Endothelial cell of umbilical vein (primary cell): ENCODE measurements at regions of chr17 and their contacts with region 1.

Region 1: GRCh38 chr17:81601525-81602120 is 35.3 kb downstream of the NPLOC4 start:
- DNase-seq: peak; percentile 80
- H3K4me3 ChIP-seq: no peak overlapping the region
- H3K27ac ChIP-seq: no peak overlapping the region
- H3K4me1 ChIP-seq: peaks cover 6% of the 10 kb centered on the region
- H3K27me3 ChIP-seq: no peaks in the 10 kb centered on the region
- CTCF ChIP-seq: peak; percentile 69 to 71
- POLR2A ChIP-seq: no peak

Region 2: DNA sequence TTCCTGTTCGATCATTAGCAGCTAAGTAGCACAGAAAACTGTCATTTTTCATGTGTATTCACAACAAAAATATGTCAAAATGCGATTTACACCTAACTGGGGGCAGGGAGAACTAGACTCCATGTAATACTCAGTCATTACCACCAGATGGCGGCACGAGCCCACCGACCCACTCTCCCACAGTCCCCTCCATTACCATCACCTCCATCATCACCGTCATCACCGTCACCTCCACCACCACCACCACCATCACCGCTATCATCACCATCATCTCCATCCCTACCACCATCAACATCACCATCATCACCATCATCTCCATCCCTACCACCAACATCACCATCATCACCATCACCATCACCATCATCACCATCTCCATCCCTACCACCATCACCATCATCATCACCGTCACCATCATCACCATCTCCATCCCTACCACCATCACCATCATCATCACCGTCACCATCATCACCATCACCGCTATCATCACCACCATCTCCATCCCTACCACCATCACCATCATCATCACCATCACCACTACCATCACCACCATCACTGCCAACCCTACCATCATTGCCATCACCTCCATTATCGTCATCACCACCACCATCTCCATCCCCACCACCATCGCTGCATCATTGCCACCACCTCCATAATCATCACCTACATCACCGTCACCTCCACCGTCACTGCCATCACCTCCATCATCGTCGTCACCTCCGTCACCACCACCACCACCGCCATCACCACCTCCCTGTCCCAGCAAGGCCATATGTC is 348.1 kb before region 1 on chr17:
- CTCF ChIA-PET with region 1: interaction called, 10 read pairs
- POLR2A ChIA-PET with region 1: no interaction called
- dilution Hi-C with region 1: no loop called
- intact Hi-C with region 1: loop called (anchors 1 kb)
- DNase-seq: peak; percentile 43
- H3K4me3 ChIP-seq: no peak overlapping the region
- H3K27ac ChIP-seq: no peak overlapping the region
- H3K4me1 ChIP-seq: no peaks in the 10 kb centered on the region
- H3K27me3 ChIP-seq: no peaks in the 10 kb centered on the region
- CTCF ChIP-seq: peak; percentile 66 to 76
- POLR2A ChIP-seq: no peak

Region 3: DNA sequence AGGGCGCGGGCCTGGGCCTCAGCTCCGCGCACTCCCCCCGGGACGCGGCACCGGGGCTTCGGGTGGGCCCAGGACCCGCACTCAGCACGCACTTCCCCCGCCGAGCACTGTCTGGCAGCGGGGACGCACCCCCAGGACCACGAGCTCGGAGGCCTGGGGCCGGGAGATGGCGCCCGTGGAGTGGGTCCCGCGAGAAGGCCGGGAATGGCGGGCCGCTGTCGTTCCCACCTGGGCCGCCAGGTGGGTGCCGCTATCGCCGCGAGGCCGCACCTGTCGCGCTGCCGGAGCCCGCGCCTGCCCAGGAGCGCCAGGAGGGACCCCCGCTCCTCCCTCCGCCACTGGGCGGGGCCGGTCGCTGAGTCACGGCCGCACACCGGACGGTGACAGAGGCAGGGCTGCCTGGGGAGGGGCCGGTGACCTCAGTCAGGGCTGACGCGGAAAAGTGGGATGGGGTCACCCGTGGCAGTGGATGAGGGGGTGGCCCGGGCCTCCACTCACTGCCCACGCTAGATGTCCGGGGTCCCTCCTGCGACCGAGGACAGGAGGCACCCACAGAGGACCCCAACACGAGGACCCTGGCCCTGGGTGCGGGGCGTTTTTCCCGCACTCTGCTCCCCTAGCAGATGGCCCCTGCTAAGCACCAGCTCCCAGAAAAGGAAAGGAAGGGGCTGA is 82.2 kb before region 1 on chr17:
- CTCF ChIA-PET with region 1: interaction called, 11 read pairs
- POLR2A ChIA-PET with region 1: no interaction called
- dilution Hi-C with region 1: no loop called
- intact Hi-C with region 1: no loop called
- DNase-seq: no peak
- H3K4me3 ChIP-seq: peak overlapping the region; percentile 11 to 32 (median 22)
- H3K27ac ChIP-seq: no peak overlapping the region
- H3K4me1 ChIP-seq: peaks cover 23% of the 10 kb centered on the region
- H3K27me3 ChIP-seq: no peaks in the 10 kb centered on the region
- CTCF ChIP-seq: peak; percentile 8 to 43
- POLR2A ChIP-seq: no peak

Region 4: GRCh38 chr17:81553018-81553615 is 48.5 kb before region 1 on chr17:
- CTCF ChIA-PET with region 1: interaction called, 16 read pairs
- POLR2A ChIA-PET with region 1: no interaction called
- dilution Hi-C with region 1: no loop called
- intact Hi-C with region 1: loop called (anchors 1 kb)
- DNase-seq: peak; percentile 81
- H3K4me3 ChIP-seq: peak overlapping the region; percentile 61 to 93 (median 72)
- H3K27ac ChIP-seq: peak overlapping the region; percentile 79
- H3K4me1 ChIP-seq: peaks cover 46% of the 10 kb centered on the region
- H3K27me3 ChIP-seq: no peaks in the 10 kb centered on the region
- CTCF ChIP-seq: no peak
- POLR2A ChIP-seq: peak; percentile 73

Region 5: GRCh38 chr17:81612172-81612970 is 10.7 kb after region 1 on chr17:
- CTCF ChIA-PET with region 1: interaction called, 19 read pairs
- POLR2A ChIA-PET with region 1: interaction called, 3 read pairs
- dilution Hi-C with region 1: no loop called
- intact Hi-C with region 1: no loop called
- DNase-seq: no peak
- H3K4me3 ChIP-seq: no peak overlapping the region
- H3K27ac ChIP-seq: no peak overlapping the region
- H3K4me1 ChIP-seq: no peaks in the 10 kb centered on the region
- H3K27me3 ChIP-seq: no peaks in the 10 kb centered on the region
- CTCF ChIP-seq: no peak
- POLR2A ChIP-seq: no peak

Region 6: DNA sequence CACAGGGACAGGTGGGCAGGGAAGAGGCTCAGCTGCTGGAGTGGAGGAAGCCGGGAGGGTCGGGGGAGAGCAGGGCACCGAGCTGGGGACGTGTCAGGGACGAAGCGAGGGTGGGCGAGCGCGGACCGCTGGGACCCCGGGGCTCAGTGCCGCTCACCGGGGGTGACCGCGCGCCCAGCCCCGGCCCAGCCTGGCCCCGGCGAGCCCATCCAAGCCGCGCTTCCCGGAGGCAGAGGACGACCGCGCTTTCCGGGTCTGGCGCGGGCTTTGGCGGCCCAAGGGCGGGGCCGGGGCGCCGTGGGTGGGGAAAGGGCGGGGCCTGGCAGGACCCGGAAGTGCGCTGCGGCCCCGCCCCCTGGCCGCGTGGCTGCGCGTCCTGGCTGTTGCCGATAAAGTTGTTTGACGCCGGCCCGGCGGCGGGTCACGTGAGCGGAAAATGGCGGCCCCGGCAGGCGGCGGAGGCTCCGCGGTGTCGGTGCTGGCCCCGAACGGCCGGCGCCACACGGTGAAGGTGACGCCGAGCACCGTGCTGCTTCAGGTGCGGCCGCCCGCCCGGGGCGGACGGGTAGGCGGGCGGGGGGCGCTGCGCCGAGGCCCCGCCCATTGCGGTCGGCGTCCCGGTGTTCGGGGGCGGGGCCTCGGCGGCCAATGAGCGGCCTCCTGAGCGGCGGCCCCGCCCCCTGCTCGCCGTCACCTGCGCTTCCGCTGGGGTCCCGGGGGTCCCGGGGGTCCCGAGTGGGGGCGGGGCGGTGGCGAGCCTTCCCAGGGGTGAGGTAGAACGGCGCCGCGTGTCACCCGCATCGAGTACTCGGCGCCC is 375.8 kb after region 1 on chr17 and contains the start of gene ASPSCR1:
- CTCF ChIA-PET with region 1: no interaction called
- POLR2A ChIA-PET with region 1: no interaction called
- dilution Hi-C with region 1: no loop called
- intact Hi-C with region 1: no loop called
- DNase-seq: peak; percentile 87
- H3K4me3 ChIP-seq: peak within 1 kb of the TSS; percentile 56 to 80 (median 61)
- H3K27ac ChIP-seq: peak within 1 kb of the TSS; percentile 90
- H3K4me1 ChIP-seq: peaks cover 5% of the 10 kb centered on the region
- H3K27me3 ChIP-seq: no peaks in the 10 kb centered on the region
- CTCF ChIP-seq: no peak
- POLR2A ChIP-seq: peak; percentile 92
- total RNA-seq, gene ASPSCR1: 30.9 and 36.5 TPM in 2 replicates